ENCODE measurements at regions of chr7 and their contacts with region 1.

Region 1: GRCh38 chr7:115019882-115020605 is 98.2 kb downstream of the MDFIC start:
- DNase-seq: no peak
- ATAC-seq: no peak
- H3K4me3 ChIP-seq: no peak overlapping the region
- H3K27ac ChIP-seq: no peak overlapping the region
- H3K4me1 ChIP-seq: no peaks in the 10 kb centered on the region
- H3K27me3 ChIP-seq: no peaks in the 10 kb centered on the region
- CTCF ChIP-seq: no peak

Region 2: GRCh38 chr7:115037128-115037802 is 17.2 kb after region 1 on chr7:
- CTCF ChIA-PET with region 1: interaction called, 10 read pairs
- POLR2A ChIA-PET with region 1: no interaction called
- in situ Hi-C with region 1: no loop called
- intact Hi-C with region 1: no loop called
- DNase-seq: no peak
- ATAC-seq: no peak
- H3K4me3 ChIP-seq: no peak overlapping the region
- H3K27ac ChIP-seq: no peak overlapping the region
- H3K4me1 ChIP-seq: no peaks in the 10 kb centered on the region
- H3K27me3 ChIP-seq: no peaks in the 10 kb centered on the region
- CTCF ChIP-seq: no peak

Region 3: DNA sequence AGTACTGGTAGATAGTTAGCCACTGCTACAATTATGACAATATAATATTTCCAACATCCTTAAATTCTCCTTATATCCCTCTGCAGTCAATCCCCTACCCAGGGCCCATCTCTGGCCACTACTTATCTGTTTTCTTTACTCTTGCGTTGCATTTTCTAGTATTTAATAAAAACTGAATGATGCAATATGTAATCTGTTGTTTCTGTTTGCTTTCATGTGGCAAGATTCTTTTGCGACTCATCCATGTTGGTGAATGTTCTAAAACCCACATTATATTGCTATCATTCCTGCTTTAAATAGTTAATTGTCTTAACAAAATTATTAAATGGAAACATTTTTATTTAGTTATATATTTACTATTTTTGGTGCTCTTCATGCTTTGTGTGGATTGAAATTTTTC is 240.3 kb after region 1 on chr7:
- CTCF ChIA-PET with region 1: no interaction called
- POLR2A ChIA-PET with region 1: no interaction called
- in situ Hi-C with region 1: no loop called
- intact Hi-C with region 1: no loop called
- DNase-seq: no peak
- ATAC-seq: no peak
- H3K4me3 ChIP-seq: no peak overlapping the region
- H3K27ac ChIP-seq: no peak overlapping the region
- H3K4me1 ChIP-seq: no peaks in the 10 kb centered on the region
- H3K27me3 ChIP-seq: no peaks in the 10 kb centered on the region
- CTCF ChIP-seq: no peak